KBM-7 (cell line): ENCODE measurements at regions of chr5 and their contacts with region 1.

Region 1: GRCh38 chr5:42908509-42909488 is 97.1 kb upstream of the SELENOP start:
- DNase-seq: peak; percentile 78

Region 2: DNA sequence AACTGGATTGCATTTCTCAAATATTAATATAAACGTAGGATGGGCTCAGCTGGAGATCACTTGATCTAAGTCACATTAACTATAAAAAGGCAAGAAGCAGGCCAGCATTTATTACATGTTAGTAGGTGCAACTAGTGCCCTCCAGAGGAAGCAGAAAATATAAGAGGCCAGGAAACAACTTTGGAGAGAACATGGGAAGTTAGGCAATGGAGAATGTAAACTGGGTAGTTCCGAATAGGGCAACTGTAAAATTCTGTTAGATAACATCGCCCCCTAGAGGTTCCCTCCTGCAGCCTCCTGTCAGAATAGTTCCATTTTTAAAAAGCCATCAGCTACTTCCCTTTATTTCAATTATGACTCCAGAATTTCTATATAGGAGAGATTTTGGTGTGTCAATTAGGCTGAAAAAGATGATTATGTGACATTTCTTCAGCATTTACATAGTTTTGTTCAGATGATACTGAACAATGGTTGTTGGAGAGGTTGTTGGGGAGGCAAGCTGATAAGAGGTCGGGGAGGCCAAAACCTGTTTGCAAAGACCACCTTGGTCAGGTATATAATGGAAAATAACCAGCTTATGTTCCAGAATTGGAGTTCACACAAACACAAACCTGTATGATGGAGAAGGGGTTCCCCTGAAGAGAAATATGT is 481.0 kb after region 1 on chr5:
- in situ Hi-C with region 1: loop called (anchors 10 kb)
- DNase-seq: peak; percentile 97